HepG2 (cell line): ENCODE measurements at regions of chr1 and their contacts with region 1.

Region 1: DNA sequence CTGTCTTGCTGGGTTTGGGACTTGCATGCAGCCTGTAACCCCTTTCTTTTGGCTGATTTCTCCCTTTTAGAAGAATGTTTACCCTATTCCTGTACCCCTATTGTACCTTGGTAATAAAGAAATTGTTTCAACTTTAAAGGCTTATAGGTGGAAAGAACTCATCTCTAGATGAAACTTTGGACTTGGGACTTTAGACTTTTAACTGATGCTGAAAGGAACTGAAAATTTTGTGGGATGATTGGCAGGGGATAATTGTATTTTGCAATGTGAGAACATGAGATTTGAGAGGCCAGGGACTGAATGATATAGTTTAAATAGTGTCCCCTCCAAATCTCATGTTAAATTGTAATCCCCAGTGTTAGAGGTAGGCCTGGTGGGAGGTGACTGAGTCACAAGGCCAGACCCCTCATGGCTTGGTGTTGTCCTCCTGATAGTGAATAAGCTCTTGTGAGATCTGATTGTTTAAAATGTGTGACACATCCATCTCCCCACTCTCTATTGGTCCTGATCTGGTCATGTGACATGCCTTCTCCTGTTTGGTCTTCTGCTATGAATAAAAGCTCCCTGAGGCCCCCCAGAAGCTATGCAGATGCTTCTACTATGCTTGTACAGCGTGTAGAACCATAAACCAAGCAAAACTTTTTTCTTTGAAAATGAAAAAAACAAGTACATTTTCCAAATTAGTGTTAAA is 1621.3 kb upstream of the B3GALT2 start:
- DNase-seq: no peak
- ATAC-seq: no peak
- H3K4me3 ChIP-seq: no peak overlapping the region
- H3K27ac ChIP-seq: no peak overlapping the region
- H3K4me1 ChIP-seq: no peaks in the 10 kb centered on the region
- H3K27me3 ChIP-seq: no peaks in the 10 kb centered on the region; a peak in 1 of 5 replicates
- CTCF ChIP-seq: no peak
- EP300 ChIP-seq: no peak
- POLR2A ChIP-seq: no peak
- RAD21 ChIP-seq: no peak

Region 2: GRCh38 chr1:194848846-194849245 is 41.2 kb after region 1 on chr1:
- CTCF ChIA-PET with region 1: no interaction called
- POLR2A ChIA-PET with region 1: no interaction called
- in situ Hi-C with region 1: no loop called
- intact Hi-C with region 1: loop called (anchors 1 kb)
- DNase-seq: no peak
- ATAC-seq: no peak
- H3K4me3 ChIP-seq: no peak overlapping the region
- H3K27ac ChIP-seq: no peak overlapping the region
- H3K4me1 ChIP-seq: no peaks in the 10 kb centered on the region
- H3K27me3 ChIP-seq: no peaks in the 10 kb centered on the region
- CTCF ChIP-seq: no peak
- EP300 ChIP-seq: no peak
- POLR2A ChIP-seq: no peak
- RAD21 ChIP-seq: no peak